Activated CD4-positive, alpha-beta T cell treated with anti-CD3 and anti-CD28 coated beads for 36 hours (primary cell): ENCODE measurements at regions of chr7 and their contacts with region 1.

Region 1: GRCh38 chr7:18590744-18591340 is 95.3 kb downstream of the HDAC9 start:
- DNase-seq: no peak
- ATAC-seq: no peak
- H3K4me3 Mint-ChIP-seq: no peak overlapping the region
- H3K27ac Mint-ChIP-seq: no peak overlapping the region
- H3K4me1 Mint-ChIP-seq: no peaks in the 10 kb centered on the region
- H3K27me3 Mint-ChIP-seq: no peaks in the 10 kb centered on the region

Region 2: GRCh38 chr7:17015598-17016031 is 1575.2 kb before region 1 on chr7:
- CTCF ChIA-PET with region 1: no interaction called
- POLR2A ChIA-PET with region 1: no interaction called
- intact Hi-C with region 1: no loop called
- DNase-seq: no peak
- ATAC-seq: no peak
- H3K4me3 Mint-ChIP-seq: no peak overlapping the region
- H3K27ac Mint-ChIP-seq: no peak overlapping the region
- H3K4me1 Mint-ChIP-seq: peaks cover 8% of the 10 kb centered on the region
- H3K27me3 Mint-ChIP-seq: no peaks in the 10 kb centered on the region

Region 3: DNA sequence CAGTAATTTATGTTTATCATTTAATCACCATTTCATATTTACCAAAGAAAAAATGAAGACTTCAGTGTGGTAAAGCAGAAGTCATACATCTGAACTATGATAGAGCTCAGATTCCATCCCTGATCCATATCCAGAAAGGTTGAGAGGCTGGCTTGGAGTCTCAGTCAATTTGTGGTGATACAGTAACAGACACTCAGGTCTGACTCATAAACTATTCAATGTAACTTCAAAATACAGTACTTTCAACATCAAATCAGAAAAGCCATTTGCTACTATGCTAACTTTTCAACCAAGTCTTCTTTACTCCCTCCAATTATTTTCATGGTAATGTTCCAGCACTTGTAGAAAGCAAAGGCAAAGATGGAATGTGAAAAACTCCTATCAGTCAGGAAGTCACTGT is 95.1 kb after region 1 on chr7:
- CTCF ChIA-PET with region 1: no interaction called
- POLR2A ChIA-PET with region 1: no interaction called
- intact Hi-C with region 1: no loop called
- DNase-seq: no peak
- ATAC-seq: no peak
- H3K4me3 Mint-ChIP-seq: no peak overlapping the region
- H3K27ac Mint-ChIP-seq: no peak overlapping the region
- H3K4me1 Mint-ChIP-seq: no peaks in the 10 kb centered on the region
- H3K27me3 Mint-ChIP-seq: no peaks in the 10 kb centered on the region

Region 4: DNA sequence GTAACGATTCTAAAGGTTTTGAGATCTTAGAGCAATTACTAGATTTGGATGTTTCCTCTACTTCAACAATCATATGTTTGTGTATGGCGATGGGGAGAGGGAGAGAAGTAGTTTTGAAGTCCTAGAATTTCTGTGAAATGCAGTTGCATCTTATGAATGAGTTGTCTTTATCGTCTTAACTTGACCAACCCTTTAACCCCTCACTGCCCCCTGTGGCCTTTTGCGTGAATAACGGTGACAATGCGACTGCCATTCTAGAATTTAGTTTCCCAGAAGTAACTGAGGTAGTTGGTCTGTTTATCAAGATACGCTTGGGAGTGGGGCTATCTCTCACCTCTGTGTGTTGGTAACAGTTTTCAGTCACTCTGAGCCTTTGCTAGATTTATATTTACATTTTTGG is 109.3 kb after region 1 on chr7:
- CTCF ChIA-PET with region 1: no interaction called
- POLR2A ChIA-PET with region 1: no interaction called
- intact Hi-C with region 1: no loop called
- DNase-seq: peak; percentile 19
- ATAC-seq: no peak
- H3K4me3 Mint-ChIP-seq: no peak overlapping the region
- H3K27ac Mint-ChIP-seq: no peak overlapping the region
- H3K4me1 Mint-ChIP-seq: no peaks in the 10 kb centered on the region
- H3K27me3 Mint-ChIP-seq: no peaks in the 10 kb centered on the region

Region 5: DNA sequence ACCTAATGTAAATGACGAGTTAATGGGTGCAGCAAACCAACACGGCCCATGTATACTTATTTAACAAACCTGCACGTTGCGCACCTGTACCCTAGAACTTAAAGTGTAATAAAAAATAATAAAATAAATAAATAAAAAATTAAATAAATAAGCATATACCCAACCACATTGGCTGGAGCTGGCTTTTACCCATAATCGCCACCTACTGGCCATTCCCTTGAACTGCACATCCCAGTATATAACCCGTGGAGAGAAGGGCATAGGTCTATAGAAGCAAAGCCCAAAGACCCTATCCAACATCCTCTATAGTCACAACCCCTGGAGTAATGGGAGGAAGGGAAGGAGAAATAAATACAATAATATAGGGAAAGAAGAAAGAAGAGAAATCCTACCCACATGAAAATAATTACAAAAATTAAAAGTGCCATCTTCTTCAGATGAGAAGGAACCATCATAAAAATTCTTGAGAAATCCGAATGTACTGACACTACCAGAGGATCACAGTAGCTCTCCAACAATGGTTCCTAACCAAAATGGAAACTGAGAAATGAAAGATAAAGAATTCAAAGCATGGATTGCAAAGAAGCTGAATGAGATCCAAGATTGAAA is 461.0 kb after region 1 on chr7:
- CTCF ChIA-PET with region 1: no interaction called
- POLR2A ChIA-PET with region 1: no interaction called
- intact Hi-C with region 1: loop called in 1 of 2 experiments (anchors 5 kb)
- DNase-seq: peak; percentile 54
- ATAC-seq: no peak
- H3K4me3 Mint-ChIP-seq: no peak overlapping the region
- H3K27ac Mint-ChIP-seq: no peak overlapping the region
- H3K4me1 Mint-ChIP-seq: no peaks in the 10 kb centered on the region
- H3K27me3 Mint-ChIP-seq: no peaks in the 10 kb centered on the region